Activated CD4-positive, alpha-beta T cell treated with anti-CD3 and anti-CD28 coated beads, Interleukin-2, amount 10 ng/mL, durations not matched to agents 24 days and 14 days (primary cell): ENCODE measurements at regions of chr11 and their contacts with region 1.

Region 1: GRCh38 chr11:59053387-59053786 is 32.7 kb upstream of the GLYATL1B start:
- DNase-seq: peak; percentile 93
- H3K4me3 Mint-ChIP-seq: no peak overlapping the region
- H3K27ac Mint-ChIP-seq: no peak overlapping the region
- H3K4me1 Mint-ChIP-seq: peaks cover 5% of the 10 kb centered on the region
- H3K27me3 Mint-ChIP-seq: peaks cover 27% of the 10 kb centered on the region

Region 2: DNA sequence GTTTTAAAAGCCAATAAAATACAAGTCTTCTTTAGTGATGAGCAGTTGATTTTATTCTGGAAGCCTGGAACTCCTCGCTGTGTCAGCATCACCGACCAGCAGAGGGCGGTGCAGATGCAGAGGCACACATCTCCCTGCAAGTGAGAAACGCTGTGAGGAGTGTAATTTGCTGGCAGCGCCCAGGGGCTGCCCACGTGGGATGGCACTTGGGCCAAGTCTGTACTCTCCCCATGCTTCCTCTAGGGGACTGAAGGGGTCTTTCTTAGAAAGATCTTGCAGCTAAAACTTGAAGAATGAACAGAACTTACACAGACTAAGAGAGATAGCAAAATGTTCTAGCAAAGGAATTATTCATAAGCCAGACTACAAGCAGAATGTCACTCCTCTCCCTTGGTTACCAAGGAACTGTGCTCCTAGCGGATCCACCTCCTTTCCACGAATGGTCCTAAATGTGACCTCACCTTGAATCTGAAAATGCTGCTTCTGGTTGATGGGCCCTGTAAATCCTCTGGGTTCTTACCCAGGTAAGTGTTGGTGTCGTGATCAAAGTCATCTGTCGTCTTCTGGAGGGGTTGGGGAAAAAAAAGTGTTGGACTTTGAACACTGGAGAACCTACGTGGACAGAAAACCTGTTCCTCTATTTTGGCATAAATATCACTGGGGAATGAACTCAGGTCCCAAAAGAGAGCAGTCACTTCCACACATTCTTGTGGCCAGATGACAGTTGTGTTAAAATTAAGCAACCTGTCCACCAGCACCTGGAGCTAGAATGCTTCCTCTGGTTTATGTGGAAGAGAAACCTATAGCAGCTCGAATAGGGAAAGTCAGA is 399.1 kb before region 1 on chr11:
- intact Hi-C with region 1: loop called (anchors 10 kb)
- DNase-seq: peak; percentile 91
- H3K4me3 Mint-ChIP-seq: no peak overlapping the region
- H3K27ac Mint-ChIP-seq: no peak overlapping the region
- H3K4me1 Mint-ChIP-seq: peaks cover 7% of the 10 kb centered on the region
- H3K27me3 Mint-ChIP-seq: peaks cover 4% of the 10 kb centered on the region

Region 3: DNA sequence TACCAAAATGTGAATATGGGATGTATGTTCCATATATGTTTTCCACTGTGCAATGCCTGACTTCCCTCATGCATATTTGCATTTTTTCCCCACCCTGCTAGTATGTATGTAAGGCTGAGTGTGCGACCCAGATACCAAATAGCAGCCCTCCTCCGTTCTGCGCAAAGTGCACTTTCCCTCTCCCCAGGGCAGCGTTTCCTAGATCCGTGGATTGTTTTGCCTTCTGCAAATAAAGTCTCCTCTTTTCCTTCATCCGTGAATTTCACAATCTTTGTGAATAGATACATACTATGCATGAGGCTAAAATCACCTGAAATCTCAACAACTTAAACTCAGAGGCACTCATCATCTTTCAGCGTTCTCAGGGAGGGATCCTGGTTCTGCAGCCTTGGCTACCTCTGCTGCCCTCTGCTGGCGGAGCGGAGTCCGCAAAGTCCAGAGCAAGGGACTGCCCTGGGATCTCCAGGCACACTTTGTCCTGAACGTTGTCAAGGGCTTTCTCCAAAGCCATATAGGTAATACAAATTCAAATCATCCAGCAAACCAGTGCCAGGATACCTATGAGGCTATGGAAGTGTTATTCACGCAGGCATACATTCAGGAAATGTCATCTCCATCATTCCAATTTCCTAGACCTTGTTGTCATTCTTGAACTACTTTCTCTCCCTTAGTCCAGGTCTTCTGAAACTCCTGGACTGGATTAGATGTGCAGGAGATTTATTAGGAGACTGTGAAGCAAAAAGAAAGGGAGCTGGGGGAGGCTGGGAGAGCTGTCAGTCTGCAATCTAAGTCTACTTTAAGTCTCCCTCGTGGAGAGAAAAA is 377.8 kb before region 1 on chr11:
- intact Hi-C with region 1: loop called (anchors 5 kb)
- DNase-seq: peak; percentile 91
- H3K4me3 Mint-ChIP-seq: no peak overlapping the region
- H3K27ac Mint-ChIP-seq: no peak overlapping the region
- H3K4me1 Mint-ChIP-seq: no peaks in the 10 kb centered on the region
- H3K27me3 Mint-ChIP-seq: peaks cover 7% of the 10 kb centered on the region

Region 4: GRCh38 chr11:58958500-58958899 is 94.9 kb before region 1 on chr11:
- intact Hi-C with region 1: loop called (anchors 1 kb)
- DNase-seq: peak; percentile 73
- H3K4me3 Mint-ChIP-seq: no peak overlapping the region
- H3K27ac Mint-ChIP-seq: no peak overlapping the region
- H3K4me1 Mint-ChIP-seq: peaks cover 2% of the 10 kb centered on the region
- H3K27me3 Mint-ChIP-seq: peaks cover 3% of the 10 kb centered on the region

Region 5: DNA sequence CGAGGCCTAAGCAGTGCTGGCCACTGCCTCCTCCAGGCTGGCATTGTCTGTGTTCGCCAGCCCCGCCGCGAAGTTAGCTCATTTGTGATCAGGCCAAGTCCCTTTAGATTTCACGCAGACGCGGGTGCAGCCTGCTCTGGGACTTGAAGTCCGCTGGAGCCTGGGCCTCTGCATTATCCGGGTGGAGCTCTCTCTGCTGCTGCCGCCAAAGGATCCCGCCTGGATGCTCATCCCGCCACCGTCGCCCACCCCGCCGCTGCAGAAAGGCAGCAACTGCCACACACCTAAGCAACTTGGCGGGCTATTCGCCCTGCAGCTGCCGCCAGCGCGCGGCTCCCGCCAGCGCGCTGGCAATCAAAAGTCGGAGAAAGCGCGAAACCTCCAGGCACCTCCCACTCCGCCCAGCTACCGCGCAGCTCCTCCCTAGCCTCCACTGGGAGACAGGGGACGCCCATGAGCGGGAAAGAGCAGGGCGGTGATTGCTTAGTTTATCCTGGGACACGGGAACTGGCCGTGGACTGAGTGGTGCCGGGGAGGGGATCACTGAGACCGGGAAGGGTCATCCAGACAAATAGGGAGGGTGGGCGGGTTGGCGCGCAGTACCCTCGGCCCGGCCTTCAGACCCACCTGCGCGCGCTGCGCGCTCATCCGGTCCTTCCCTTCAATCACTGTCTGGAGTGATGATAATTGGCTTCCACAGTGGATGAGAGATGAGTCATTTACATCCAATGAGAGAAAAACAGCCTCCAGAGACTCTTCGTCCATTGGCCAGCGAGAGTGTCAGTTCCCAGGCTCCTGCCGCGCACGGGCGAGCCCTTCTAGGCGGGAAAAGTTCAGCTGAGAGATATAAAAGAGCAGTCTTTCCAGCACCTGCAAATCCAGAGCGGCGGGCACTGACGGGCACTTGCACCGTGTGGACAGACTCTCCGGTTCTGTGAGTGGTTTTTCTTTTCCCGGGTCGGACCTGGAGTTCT is 53.3 kb after region 1 on chr11 and contains the start of gene FAM111B:
- intact Hi-C with region 1: loop called (anchors 5 kb)
- DNase-seq: peak; percentile 93
- H3K4me3 Mint-ChIP-seq: peak within 1 kb of the TSS; percentile 94
- H3K27ac Mint-ChIP-seq: peak within 1 kb of the TSS; percentile 85
- H3K4me1 Mint-ChIP-seq: peaks cover 66% of the 10 kb centered on the region
- H3K27me3 Mint-ChIP-seq: no peaks in the 10 kb centered on the region
- total RNA-seq, gene FAM111B: 68.4 and 70.1 TPM in 2 replicates

Region 6: GRCh38 chr11:59135648-59136461 is 82.5 kb after region 1 on chr11:
- intact Hi-C with region 1: loop called (anchors 1 kb)
- DNase-seq: peak; percentile 97
- H3K4me3 Mint-ChIP-seq: peak overlapping the region; percentile 73
- H3K27ac Mint-ChIP-seq: peak overlapping the region; percentile 70
- H3K4me1 Mint-ChIP-seq: peaks cover 12% of the 10 kb centered on the region
- H3K27me3 Mint-ChIP-seq: no peaks in the 10 kb centered on the region

Region 7: GRCh38 chr11:59158206-59159068 is 105.0 kb after region 1 on chr11:
- intact Hi-C with region 1: loop called (anchors 1 kb)
- DNase-seq: peak; percentile 90
- H3K4me3 Mint-ChIP-seq: no peak overlapping the region
- H3K27ac Mint-ChIP-seq: no peak overlapping the region
- H3K4me1 Mint-ChIP-seq: peaks cover 7% of the 10 kb centered on the region
- H3K27me3 Mint-ChIP-seq: peaks cover 15% of the 10 kb centered on the region